IMR-90 (cell line): ENCODE measurements at regions of chr2 and their contacts with region 1.

Region 1: GRCh38 chr2:159381574-159381973 is 95.1 kb upstream of the WDSUB1 start:
- DNase-seq: no peak
- ATAC-seq: no peak
- H3K4me3 ChIP-seq: no peak overlapping the region
- H3K27ac ChIP-seq: no peak overlapping the region
- H3K4me1 ChIP-seq: no peaks in the 10 kb centered on the region
- H3K27me3 ChIP-seq: no peaks in the 10 kb centered on the region
- CTCF ChIP-seq: no peak
- POLR2A ChIP-seq: no peak
- RAD21 ChIP-seq: no peak

Region 2: DNA sequence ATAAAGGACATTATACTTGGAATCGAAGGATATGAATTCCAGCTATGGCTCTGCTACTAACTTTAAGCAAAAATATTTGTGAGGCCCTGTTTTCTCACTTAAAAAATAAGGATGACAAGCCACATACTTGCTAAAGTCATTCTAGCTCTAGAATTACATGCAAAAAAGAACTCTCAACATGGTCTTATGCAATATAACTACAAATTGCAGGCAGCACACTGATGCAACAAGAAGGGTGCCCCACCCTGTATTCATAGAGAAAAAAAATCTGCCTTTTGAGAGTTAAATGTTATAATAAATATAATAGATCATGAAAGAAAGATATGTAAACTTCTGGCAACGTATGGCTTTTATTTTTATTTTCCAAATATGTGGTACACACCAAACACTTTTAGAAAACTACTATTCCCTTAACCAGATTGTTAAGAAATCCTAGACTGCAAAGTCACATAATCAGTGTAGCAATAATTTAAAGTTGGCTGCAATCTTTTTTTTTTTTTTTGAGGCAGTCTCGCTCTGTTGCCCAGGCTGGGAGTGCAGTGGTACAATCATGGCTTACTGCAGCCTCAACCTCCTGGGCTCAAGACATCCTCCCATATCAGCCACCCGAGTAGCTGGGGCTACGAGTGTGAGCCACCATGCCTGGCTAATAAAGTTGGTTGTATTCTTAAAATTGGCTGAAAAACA is 54.9 kb before region 1 on chr2:
- CTCF ChIA-PET with region 1: no interaction called
- POLR2A ChIA-PET with region 1: no interaction called
- dilution Hi-C with region 1: no loop called
- in situ Hi-C with region 1: no loop called
- intact Hi-C with region 1: no loop called
- DNase-seq: peak; percentile 39
- ATAC-seq: peak; percentile 49
- H3K4me3 ChIP-seq: no peak overlapping the region
- H3K27ac ChIP-seq: peak overlapping the region; percentile 57; the same call in 1 of the 2 replicates
- H3K4me1 ChIP-seq: no peaks in the 10 kb centered on the region
- H3K27me3 ChIP-seq: no peaks in the 10 kb centered on the region
- CTCF ChIP-seq: no peak
- POLR2A ChIP-seq: no peak
- RAD21 ChIP-seq: no peak

Region 3: DNA sequence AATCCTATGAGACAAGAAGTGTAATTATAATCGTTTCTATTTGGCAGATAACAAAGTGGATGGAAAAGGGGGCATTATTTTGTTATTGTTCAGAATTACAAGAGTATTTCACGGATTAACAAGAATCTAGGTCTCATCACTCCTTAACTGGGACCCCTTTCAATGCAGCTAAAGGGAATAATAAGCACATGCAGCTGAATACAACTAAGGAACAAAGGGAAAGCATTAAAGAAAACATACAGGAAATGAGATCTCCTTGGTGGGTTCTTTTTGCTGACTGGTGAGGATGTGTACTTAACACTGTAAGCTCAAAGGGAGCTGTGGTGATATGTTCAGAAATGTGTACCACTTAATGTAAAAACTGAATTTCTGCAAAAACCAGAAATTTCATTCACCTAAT is 45.5 kb after region 1 on chr2:
- CTCF ChIA-PET with region 1: no interaction called
- POLR2A ChIA-PET with region 1: no interaction called
- dilution Hi-C with region 1: no loop called
- in situ Hi-C with region 1: no loop called
- intact Hi-C with region 1: no loop called
- DNase-seq: no peak
- ATAC-seq: no peak
- H3K4me3 ChIP-seq: no peak overlapping the region
- H3K27ac ChIP-seq: no peak overlapping the region
- H3K4me1 ChIP-seq: no peaks in the 10 kb centered on the region
- H3K27me3 ChIP-seq: no peaks in the 10 kb centered on the region
- CTCF ChIP-seq: no peak
- POLR2A ChIP-seq: no peak
- RAD21 ChIP-seq: no peak

Region 4: GRCh38 chr2:159623436-159623835 is 241.9 kb after region 1 on chr2:
- CTCF ChIA-PET with region 1: interaction called, 10 read pairs
- POLR2A ChIA-PET with region 1: no interaction called
- dilution Hi-C with region 1: no loop called
- in situ Hi-C with region 1: no loop called
- intact Hi-C with region 1: no loop called
- DNase-seq: no peak
- ATAC-seq: no peak
- H3K4me3 ChIP-seq: no peak overlapping the region
- H3K27ac ChIP-seq: no peak overlapping the region
- H3K4me1 ChIP-seq: no peaks in the 10 kb centered on the region
- H3K27me3 ChIP-seq: no peaks in the 10 kb centered on the region
- CTCF ChIP-seq: no peak
- POLR2A ChIP-seq: no peak
- RAD21 ChIP-seq: no peak